Heart right ventricle (tissue), 16 donors: ENCODE measurements at regions of chr9 and their contacts with region 1.

Region 1: GRCh38 chr9:100598641-100599145 is 20.8 kb downstream of the CAVIN4 start:
- DNase-seq: peak; percentile 75 to 86
- ATAC-seq: peak; percentile 77 to 89 (median 86)
- H3K4me3 ChIP-seq: peak overlapping the region; percentile 31 to 63 (median 54)
- H3K27ac ChIP-seq: peak overlapping the region in 2 of 10 donors; percentile 7 to 15
- H3K4me1 ChIP-seq: peaks cover 0 to 20% (median 16%) of the 10 kb centered on the region in 9 donors
- H3K27me3 ChIP-seq: peaks cover 0 to 3% (median 0%) of the 10 kb centered on the region in 7 donors
- CTCF ChIP-seq: no peak

Region 2: DNA sequence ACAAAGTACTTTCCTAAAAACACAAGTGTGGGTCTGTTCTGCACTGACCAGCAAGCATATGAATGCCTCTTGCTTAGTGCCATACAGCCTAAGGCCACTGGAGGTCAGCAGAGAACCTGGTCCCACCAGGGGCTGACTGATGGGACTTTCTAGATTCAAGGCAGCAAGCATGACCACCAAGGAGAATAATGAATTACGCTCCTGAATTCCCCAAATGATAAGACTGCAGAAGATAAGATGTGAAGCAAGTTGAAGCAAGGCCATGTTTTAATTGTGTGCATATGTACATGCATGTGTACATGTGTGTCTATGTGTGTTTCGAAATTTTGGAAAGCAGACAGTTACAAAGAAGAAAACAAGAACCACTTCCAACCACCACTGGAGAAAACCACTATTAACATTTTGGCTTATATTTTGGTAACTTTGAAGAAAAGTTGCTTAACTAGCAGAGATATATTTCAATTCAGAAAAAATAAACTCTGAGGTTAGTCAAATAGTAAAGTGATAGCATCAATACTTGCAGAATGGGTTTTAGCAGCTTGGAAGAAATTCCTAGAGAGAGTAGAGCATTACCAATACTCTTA is 570.4 kb before region 1 on chr9:
- intact Hi-C with region 1: loop called in 5 of 10 experiments (anchors 5 to 10 kb)
- DNase-seq: peak; percentile 50 to 74
- ATAC-seq: peak; percentile 78 to 95 (median 91)
- H3K4me3 ChIP-seq: no peak overlapping the region
- H3K27ac ChIP-seq: no peak overlapping the region
- H3K4me1 ChIP-seq: peaks cover 0 to 18% (median 0%) of the 10 kb centered on the region in 9 donors
- H3K27me3 ChIP-seq: no peaks in the 10 kb centered on the region
- CTCF ChIP-seq: peak; percentile 78 to 98 (median 94)

Region 3: GRCh38 chr9:100426530-100427428 is 171.9 kb before region 1 on chr9 and contains the start of gene MSANTD3:
- intact Hi-C with region 1: loop called in 3 of 10 experiments (anchors 5 to 10 kb)
- DNase-seq: peak; percentile 55 to 73
- ATAC-seq: peak; percentile 82 to 92 (median 87)
- H3K4me3 ChIP-seq: peak within 1 kb of the TSS; percentile 72 to 99 (median 91)
- H3K27ac ChIP-seq: peak within 1 kb of the TSS; percentile 61 to 94 (median 88)
- H3K4me1 ChIP-seq: peaks cover 4 to 36% (median 28%) of the 10 kb centered on the region in 9 donors
- H3K27me3 ChIP-seq: no peaks in the 10 kb centered on the region
- CTCF ChIP-seq: peak in 3 of 9 donors; percentile 27 to 39 (median 31)
- total RNA-seq, gene MSANTD3: 11.9 to 32.2 (median 20.1) TPM

Region 4: DNA sequence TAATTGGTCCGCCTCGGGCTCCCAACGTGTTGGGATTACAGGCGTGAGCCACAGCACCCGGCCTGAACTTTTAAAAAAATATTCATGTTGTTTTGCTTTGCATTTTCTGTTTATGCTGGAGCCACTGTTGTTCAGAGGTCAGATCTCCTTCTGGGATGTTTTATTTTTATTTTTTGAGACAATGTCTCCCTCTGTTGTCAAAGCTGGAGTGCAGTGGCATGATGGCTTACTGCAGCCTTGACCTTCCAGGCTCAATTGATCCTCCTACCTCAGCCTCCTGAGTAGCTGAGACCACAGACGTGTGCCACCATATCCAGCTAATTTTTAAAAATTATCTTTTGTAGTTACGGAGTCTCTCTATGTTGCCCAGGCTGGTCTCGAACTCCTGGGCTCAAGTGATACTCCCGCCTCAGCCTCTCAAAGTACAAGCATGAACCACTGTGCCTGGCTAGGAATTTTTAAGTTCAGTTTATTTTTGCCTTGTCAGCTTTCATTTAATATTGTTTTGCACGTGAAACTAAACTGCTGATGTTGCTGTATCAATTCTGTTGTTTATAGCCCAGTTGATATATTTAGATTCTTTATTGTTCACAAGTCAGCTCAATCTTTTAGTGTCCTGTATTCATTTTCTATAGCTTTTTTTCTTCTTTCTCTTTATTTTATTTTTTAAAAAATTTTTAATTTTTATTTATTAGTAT is 112.1 kb before region 1 on chr9:
- intact Hi-C with region 1: loop called in 1 of 10 experiments (anchors 5 kb)
- DNase-seq: no peak
- ATAC-seq: no peak
- H3K4me3 ChIP-seq: no peak overlapping the region
- H3K27ac ChIP-seq: no peak overlapping the region
- H3K4me1 ChIP-seq: no peaks in the 10 kb centered on the region
- H3K27me3 ChIP-seq: no peaks in the 10 kb centered on the region
- CTCF ChIP-seq: no peak

Region 5: DNA sequence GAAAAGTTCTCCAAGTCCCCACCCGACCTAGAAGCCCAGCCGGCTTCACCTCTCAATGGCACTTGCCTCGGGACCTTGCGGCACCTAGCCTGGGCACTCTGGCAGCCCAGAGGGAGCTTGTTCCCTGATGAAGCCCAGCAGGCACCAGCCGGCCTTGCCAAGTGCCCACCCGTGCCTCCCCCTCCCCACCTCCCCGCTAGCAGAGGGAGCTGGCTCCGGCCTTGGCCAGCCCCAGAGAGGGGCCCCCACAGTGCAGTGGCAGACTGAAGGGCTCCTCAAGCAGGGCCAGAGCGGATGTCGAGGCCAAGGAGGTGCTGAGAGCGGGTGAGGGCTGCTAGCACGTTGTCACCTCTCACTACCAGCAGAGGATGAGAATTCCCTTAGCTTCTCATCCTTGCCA is 58.4 kb before region 1 on chr9:
- intact Hi-C with region 1: no loop called
- DNase-seq: no peak
- ATAC-seq: no peak
- H3K4me3 ChIP-seq: no peak overlapping the region
- H3K27ac ChIP-seq: no peak overlapping the region
- H3K4me1 ChIP-seq: no peaks in the 10 kb centered on the region
- H3K27me3 ChIP-seq: no peaks in the 10 kb centered on the region
- CTCF ChIP-seq: no peak

Region 6: GRCh38 chr9:101119206-101119819 is 520.6 kb after region 1 on chr9:
- intact Hi-C with region 1: loop called in 1 of 10 experiments (anchors 5 kb)
- DNase-seq: peak; percentile 30 to 31
- ATAC-seq: peak in 6 of 8 donors; percentile 34 to 78 (median 62)
- H3K4me3 ChIP-seq: no peak overlapping the region
- H3K27ac ChIP-seq: no peak overlapping the region
- H3K4me1 ChIP-seq: peaks cover 0 to 11% (median 0%) of the 10 kb centered on the region in 9 donors
- H3K27me3 ChIP-seq: peaks cover 0 to 6% (median 0%) of the 10 kb centered on the region in 7 donors
- CTCF ChIP-seq: peak; percentile 54 to 77 (median 72)